ENCODE measurements at regions of chr4 and their contacts with region 1.

Region 1: DNA sequence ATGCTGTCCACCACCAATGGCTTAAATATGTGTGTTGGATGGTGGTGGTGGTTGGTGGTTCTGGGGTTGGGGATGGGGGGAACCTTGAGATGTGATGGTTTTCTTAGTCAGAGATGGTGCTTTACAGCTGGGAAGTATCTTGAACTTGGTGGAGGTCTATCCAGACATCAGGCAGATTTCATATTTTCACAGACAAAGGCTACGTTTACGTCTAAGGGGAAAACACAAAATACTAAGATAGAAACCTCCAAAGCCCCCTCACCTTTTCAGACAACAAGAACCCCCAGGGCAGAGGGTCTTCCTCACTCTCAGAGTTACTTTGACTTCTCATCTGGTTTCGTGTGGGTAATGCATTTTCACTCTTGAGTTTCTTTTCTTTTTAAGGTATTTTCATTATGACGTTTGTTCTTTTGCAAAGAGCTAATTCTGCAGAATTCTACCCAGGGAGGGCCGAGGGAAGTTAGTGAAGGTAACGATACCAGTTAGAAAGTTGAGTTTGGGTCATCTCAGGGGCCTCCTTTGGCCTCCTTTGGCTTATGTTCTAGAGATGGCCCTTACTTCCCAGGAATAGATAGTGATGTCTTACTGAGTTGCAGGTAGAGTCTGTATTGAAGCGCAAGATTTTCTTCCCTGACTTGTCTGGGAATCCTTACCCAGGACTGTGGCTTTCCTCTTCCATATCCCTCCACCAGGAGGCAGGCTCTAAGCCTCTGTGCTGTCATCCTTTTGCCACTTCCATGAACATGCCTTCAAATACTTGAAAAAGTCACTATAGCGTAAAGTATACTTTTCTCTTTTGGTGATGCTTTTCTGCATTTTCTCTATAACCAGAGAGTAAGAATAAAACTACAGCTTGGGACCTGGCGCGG is 31.9 kb downstream of the RHOH start:
- DNase-seq: peak; percentile 64
- ATAC-seq: peak; percentile 34
- H3K4me3 Mint-ChIP-seq: peak overlapping the region; percentile 61
- H3K27ac Mint-ChIP-seq: peak overlapping the region; percentile 96
- H3K4me1 Mint-ChIP-seq: peaks cover 93% of the 10 kb centered on the region
- H3K27me3 Mint-ChIP-seq: no peaks in the 10 kb centered on the region

Region 2: GRCh38 chr4:40193016-40193571 is 35.6 kb before region 1 on chr4:
- CTCF ChIA-PET with region 1: interaction called, 5 read pairs
- POLR2A ChIA-PET with region 1: interaction called, 8 read pairs
- intact Hi-C with region 1: loop called in 1 of 2 experiments (anchors 5 kb)
- DNase-seq: peak; percentile 49
- ATAC-seq: peak; percentile 7
- H3K4me3 Mint-ChIP-seq: peak overlapping the region; percentile 98
- H3K27ac Mint-ChIP-seq: peak overlapping the region; percentile 100
- H3K4me1 Mint-ChIP-seq: peaks cover 71% of the 10 kb centered on the region
- H3K27me3 Mint-ChIP-seq: no peaks in the 10 kb centered on the region

Region 3: GRCh38 chr4:40212674-40213527 is 15.8 kb before region 1 on chr4:
- CTCF ChIA-PET with region 1: interaction called, 33 read pairs
- POLR2A ChIA-PET with region 1: interaction called, 9 read pairs
- intact Hi-C with region 1: no loop called
- DNase-seq: peak; percentile 9
- ATAC-seq: peak; percentile 35
- H3K4me3 Mint-ChIP-seq: peak overlapping the region; percentile 75
- H3K27ac Mint-ChIP-seq: peak overlapping the region; percentile 93
- H3K4me1 Mint-ChIP-seq: peaks cover 92% of the 10 kb centered on the region
- H3K27me3 Mint-ChIP-seq: no peaks in the 10 kb centered on the region

Region 4: DNA sequence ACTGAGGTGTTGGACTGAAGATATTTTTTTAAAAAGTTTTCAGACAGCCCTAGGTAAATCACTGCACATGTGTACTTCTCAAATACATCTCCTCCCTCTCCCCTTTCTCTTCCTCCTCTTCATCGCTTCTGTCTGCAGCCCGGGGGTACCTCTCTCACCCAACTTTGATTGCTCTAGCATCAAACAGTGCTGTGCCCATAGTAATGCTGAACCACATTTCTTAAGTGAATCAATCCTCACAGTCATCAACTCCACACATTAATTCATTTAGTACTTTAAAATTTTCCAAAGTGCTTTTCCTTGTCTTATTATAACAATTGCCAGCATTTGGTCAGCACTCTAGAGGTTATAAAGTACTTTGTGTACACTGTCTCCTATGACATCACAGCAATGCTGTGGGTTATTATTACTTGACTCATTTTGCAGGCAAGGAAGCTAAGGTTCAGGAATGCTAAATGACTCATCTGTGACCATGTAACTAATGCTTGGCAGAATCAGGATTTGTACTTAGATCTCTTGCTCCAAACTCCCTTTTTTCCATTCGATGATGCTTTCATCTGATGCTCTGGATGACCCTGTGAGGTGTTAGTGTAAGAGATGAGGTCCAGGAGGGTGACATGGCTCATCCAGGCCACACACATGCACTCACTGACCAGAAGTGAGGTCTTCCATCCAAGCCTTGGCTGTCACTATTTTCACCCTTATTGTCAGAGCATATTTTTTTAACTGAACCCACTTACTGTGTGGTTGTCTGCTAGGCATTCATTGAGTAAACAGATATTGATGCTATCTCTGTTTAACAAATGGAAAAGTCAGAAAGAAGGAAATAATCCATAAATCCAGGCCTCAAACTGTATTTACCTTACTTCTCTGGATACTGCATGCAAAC is 26.9 kb after region 1 on chr4:
- CTCF ChIA-PET with region 1: interaction called, 4 read pairs
- POLR2A ChIA-PET with region 1: interaction called, 5 read pairs
- intact Hi-C with region 1: loop called (anchors 1 kb)
- DNase-seq: no peak
- ATAC-seq: peak; percentile 31
- H3K4me3 Mint-ChIP-seq: no peak overlapping the region
- H3K27ac Mint-ChIP-seq: peak overlapping the region; percentile 44
- H3K4me1 Mint-ChIP-seq: peaks cover 76% of the 10 kb centered on the region
- H3K27me3 Mint-ChIP-seq: no peaks in the 10 kb centered on the region

Region 5: GRCh38 chr4:40325189-40326019 is 96.7 kb after region 1 on chr4:
- CTCF ChIA-PET with region 1: interaction called, 15 read pairs
- POLR2A ChIA-PET with region 1: no interaction called
- intact Hi-C with region 1: no loop called
- DNase-seq: peak; percentile 78
- ATAC-seq: peak; percentile 98
- H3K4me3 Mint-ChIP-seq: no peak overlapping the region
- H3K27ac Mint-ChIP-seq: no peak overlapping the region
- H3K4me1 Mint-ChIP-seq: peaks cover 27% of the 10 kb centered on the region
- H3K27me3 Mint-ChIP-seq: peaks cover 2% of the 10 kb centered on the region

Region 6: DNA sequence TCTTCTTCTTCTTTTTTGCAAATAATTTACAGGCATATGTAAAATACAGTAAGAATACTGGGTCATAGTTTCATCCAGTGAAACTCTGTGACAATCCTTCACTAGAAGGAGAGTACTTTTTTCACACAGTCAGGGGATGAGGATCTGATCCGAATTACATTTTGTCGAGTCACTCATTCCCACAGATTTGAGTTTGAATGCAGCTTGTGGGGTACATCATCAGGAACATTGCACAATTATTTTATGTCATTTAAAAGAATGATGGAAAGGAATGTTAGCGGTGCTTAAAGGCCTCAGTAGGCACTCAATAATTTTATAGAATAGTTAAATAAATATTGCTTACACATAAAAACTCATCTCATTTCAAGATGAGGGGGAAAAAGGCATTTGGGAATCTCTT is 195.0 kb after region 1 on chr4:
- CTCF ChIA-PET with region 1: no interaction called
- POLR2A ChIA-PET with region 1: no interaction called
- intact Hi-C with region 1: no loop called
- DNase-seq: no peak
- ATAC-seq: no peak
- H3K4me3 Mint-ChIP-seq: no peak overlapping the region
- H3K27ac Mint-ChIP-seq: no peak overlapping the region
- H3K4me1 Mint-ChIP-seq: no peaks in the 10 kb centered on the region
- H3K27me3 Mint-ChIP-seq: no peaks in the 10 kb centered on the region

Region 7: GRCh38 chr4:41437111-41437536 is 1208.4 kb after region 1 on chr4:
- CTCF ChIA-PET with region 1: no interaction called
- POLR2A ChIA-PET with region 1: no interaction called
- intact Hi-C with region 1: no loop called
- DNase-seq: no peak
- ATAC-seq: no peak
- H3K4me3 Mint-ChIP-seq: no peak overlapping the region
- H3K27ac Mint-ChIP-seq: no peak overlapping the region
- H3K4me1 Mint-ChIP-seq: no peaks in the 10 kb centered on the region
- H3K27me3 Mint-ChIP-seq: peaks cover 4% of the 10 kb centered on the region

Measured in activated CD4-positive, alpha-beta T cell treated with anti-CD3 and anti-CD28 coated beads for 36 hours (primary cell).